ENCODE measurements at regions of chr20 and their contacts with region 1.

Region 1: DNA sequence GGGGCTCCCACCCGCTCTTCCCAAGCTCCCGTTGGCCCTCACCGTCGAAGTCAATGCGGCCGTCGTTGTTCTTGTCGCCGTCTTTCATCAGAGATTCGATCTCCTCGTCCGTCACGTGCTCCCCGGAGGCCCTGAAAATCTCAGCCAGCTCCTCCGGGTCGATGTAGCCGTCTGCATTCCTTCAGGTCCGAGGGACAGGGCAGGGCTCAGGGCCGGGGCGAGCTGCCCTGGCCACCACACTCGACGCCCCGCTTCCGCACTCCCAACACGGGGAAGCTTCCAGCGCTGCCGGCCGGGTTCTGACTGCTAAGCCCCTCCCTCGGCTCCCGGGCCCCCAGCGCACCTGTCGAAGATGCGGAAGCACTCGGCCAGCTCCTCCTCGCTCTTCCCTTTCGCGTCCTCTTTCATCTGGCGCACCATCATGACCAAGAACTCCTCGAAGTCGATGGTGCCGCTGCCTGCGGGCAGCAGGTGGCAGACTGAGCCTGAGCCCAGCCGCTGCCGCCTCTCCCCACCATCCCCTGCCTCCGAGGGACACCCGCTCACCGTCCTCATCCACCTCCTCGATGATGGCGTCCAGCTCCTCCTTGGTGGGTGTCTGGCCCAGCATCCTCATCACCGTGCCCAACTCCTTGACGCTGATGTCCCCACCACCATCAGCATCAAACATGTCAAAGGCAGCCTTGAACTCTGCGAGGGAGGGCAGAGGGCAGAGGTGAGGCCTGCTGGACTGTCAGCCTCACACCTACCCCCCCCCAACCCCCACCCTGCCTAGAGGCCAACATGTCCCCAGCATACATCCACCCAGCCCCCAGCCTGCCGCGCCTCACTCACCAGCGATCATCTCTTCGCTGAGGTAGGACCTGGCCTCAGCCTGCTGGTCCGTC is 2.9 kb downstream of the TNNC2 start:
- DNase-seq: no peak
- H3K4me3 ChIP-seq: no peak overlapping the region; the same call in 1 of the 2 replicates
- CTCF ChIP-seq: peak; percentile 61

Region 2: GRCh38 chr20:45963059-45964005 is 139.1 kb after region 1 on chr20:
- CTCF ChIA-PET with region 1: interaction called, 27 read pairs
- POLR2A ChIA-PET with region 1: no interaction called
- DNase-seq: no peak
- H3K4me3 ChIP-seq: no peak overlapping the region
- CTCF ChIP-seq: peak; percentile 26

Measured in AG04449 (cell line).